ENCODE measurements at regions of chr3 and their contacts with region 1.

Region 1: GRCh38 chr3:194134757-194135528 is 1.0 kb upstream of the HES1 start:
- DNase-seq: peak; percentile 96 to 100
- H3K4me3 ChIP-seq: peak overlapping the region; percentile 55
- H3K27ac ChIP-seq: peak overlapping the region; percentile 88
- H3K4me1 ChIP-seq: peaks cover 60% of the 10 kb centered on the region
- H3K27me3 ChIP-seq: no peaks in the 10 kb centered on the region
- CTCF ChIP-seq: no peak

Region 2: DNA sequence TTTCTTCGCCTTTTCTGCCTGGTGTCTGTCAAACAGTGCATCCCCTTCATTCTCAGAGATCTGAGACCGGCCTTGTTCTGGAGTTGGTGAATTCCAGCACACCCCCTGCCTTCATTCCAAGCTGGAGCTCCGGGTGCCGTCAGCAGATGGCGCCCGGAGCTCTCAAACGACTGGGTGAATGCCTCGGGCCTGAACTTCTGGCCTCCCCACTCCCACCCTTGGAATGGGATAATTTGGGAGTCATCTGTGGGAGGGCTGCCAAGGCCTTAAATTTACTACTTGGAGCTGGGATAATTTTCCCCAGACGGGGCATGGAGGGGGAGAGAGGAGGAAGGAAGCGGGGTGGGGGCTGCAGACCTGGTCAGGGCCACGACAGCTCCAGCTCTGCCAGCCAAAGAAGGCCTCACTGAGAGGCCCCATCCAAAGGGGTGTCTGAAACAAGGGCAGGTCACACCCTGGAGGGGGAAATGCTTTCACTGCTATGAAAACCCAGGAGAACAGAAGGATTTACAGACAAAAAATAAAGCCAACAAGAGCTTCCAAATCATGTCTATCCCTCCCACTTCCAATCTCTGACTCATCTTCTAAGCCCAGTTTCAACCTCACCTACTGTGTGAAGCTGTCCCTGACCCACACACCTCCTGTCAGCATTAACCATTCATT is 354.0 kb before region 1 on chr3:
- CTCF ChIA-PET with region 1: interaction called, 5 read pairs
- POLR2A ChIA-PET with region 1: interaction called, 33 read pairs
- intact Hi-C with region 1: loop called (anchors 1 kb)
- DNase-seq: peak; percentile 89 to 96
- H3K4me3 ChIP-seq: no peak overlapping the region
- H3K27ac ChIP-seq: peak overlapping the region; percentile 98
- H3K4me1 ChIP-seq: peaks cover 59% of the 10 kb centered on the region
- H3K27me3 ChIP-seq: no peaks in the 10 kb centered on the region
- CTCF ChIP-seq: peak; percentile 99

Region 3: DNA sequence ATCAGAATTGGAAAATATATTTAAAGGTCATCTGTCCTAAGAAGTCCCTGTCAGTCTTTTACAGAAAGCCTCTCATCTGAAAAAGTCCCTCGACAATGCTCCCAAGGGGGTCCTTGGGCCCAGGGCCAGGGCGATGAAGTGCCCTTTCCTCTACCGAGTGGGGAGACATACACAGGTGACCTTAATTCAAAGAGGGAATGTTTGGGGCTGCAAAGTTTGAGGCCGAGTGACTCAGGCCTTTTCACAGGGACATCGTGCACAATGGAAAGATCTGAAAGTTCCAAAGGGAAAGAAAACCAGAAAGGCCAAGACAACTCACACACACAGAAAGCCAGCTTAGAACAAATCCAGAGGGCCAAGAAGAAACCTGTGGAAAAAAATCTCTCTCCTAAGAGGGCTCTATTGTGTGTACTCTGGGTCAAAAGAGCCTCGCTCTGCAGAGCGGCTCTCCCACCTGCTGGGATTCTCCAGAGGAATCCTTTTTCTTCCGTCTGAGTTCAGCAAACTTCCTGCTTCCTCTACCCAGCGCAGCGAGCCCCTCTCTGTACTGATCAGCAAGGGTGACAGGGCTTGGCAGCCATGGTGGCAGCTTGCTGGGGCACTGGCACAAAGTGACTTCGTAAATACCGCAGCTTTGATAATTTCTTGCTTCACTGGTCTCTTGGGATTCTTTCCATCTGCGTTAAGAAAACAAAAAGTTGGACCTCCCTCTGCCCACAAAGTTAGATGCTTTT is 282.8 kb before region 1 on chr3:
- CTCF ChIA-PET with region 1: no interaction called
- POLR2A ChIA-PET with region 1: interaction called, 27 read pairs
- intact Hi-C with region 1: loop called (anchors 1 kb)
- DNase-seq: peak; percentile 82 to 98
- H3K4me3 ChIP-seq: peak overlapping the region; percentile 49
- H3K27ac ChIP-seq: peak overlapping the region; percentile 98
- H3K4me1 ChIP-seq: peaks cover 70% of the 10 kb centered on the region
- H3K27me3 ChIP-seq: no peaks in the 10 kb centered on the region
- CTCF ChIP-seq: no peak

Region 4: GRCh38 chr3:193946945-193947344 is 188.0 kb before region 1 on chr3:
- CTCF ChIA-PET with region 1: interaction called, 17 read pairs
- POLR2A ChIA-PET with region 1: interaction called, 7 read pairs
- intact Hi-C with region 1: loop called (anchors 1 kb)
- DNase-seq: peak; percentile 83 to 87
- H3K4me3 ChIP-seq: no peak overlapping the region
- H3K27ac ChIP-seq: no peak overlapping the region
- H3K4me1 ChIP-seq: peaks cover 16% of the 10 kb centered on the region
- H3K27me3 ChIP-seq: no peaks in the 10 kb centered on the region
- CTCF ChIP-seq: no peak

Region 5: DNA sequence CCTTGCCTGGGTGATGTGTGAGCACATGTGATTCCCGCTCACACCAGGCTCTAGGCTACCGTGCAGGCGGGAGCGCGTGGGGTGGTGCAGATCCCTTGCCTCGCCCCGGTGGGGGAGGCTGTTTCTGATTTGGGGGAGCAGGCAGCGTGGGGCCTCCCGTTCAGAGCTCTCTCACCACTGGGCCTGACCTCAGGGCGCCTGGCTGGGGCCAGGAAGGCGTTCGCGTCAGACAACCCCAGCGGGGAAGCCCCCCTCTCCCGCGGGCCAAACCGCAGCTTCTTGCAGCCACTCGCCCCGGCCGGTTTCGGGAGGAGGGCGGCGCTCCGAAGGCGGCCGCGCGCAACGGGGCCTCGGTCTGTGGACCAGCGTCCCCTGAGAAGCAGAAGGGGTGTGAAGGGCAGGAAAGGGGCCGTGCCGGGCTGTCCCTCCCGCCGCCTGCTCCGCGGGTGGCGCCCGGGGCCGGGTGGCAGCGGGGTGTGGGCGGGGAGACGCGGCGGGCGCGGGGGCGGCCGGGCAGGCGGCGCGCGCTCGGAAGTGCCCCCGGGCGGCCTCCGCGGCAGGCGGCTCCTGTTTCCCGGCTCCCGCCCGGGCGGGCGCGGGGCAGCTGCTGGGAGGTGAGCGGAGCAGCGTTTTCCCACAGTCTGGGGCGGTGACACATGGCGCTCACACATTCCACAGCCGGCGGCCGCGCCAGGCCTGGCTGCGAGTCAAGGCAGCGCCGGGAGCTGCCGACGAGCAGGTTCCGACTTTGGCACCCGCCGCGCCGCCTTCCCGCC is 64.1 kb before region 1 on chr3:
- CTCF ChIA-PET with region 1: interaction called, 7 read pairs
- POLR2A ChIA-PET with region 1: interaction called, 26 read pairs
- intact Hi-C with region 1: loop called (anchors 1 kb)
- DNase-seq: peak; percentile 92 to 97
- H3K4me3 ChIP-seq: peak overlapping the region; percentile 59; the same call in 1 of the 2 replicates
- H3K27ac ChIP-seq: peak overlapping the region; percentile 74
- H3K4me1 ChIP-seq: peaks cover 47% of the 10 kb centered on the region
- H3K27me3 ChIP-seq: no peaks in the 10 kb centered on the region
- CTCF ChIP-seq: no peak

Region 6: DNA sequence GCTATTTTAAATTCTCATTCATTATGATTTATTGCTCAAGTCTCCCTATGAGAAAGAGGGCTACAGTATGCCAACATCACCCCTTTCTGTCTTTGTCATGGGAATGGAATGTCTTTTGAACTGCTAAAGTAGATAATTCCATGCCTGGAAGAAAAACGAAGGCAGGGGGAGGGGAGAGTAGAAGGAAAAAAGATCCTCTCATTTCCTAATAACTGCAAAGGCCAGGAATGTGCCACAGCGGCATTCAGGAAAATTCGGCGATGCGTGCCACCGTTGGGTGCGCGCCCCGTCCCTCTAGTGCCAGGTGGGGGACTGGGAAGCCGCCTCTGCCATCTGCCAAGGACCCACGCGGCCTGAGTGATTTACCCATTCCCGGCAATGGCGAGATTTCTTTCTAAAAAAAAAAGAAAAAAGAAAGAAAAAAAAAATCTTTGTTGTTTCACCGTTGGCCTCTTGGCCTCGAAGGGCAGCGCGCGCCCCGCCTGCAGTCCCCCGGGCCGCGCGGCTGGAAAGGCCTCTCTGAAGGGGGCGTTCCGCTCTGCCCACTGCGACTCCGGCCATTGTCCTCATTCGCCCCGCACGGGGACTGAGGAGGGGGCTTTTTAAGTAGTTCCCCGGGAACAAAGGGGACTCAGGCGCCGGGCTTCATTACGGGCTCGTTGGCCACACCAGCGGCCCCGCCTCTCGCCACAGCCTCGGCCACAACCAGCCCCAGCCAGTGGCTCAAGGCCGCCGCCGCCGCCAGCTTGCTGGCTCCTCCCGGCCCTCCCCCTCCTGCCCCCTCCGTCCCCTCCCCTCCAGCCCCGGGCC is 161.7 kb after region 1 on chr3:
- CTCF ChIA-PET with region 1: no interaction called
- POLR2A ChIA-PET with region 1: interaction called, 6 read pairs
- intact Hi-C with region 1: loop called (anchors 1 kb)
- DNase-seq: peak; percentile 94 to 98
- H3K4me3 ChIP-seq: peak overlapping the region; percentile 57
- H3K27ac ChIP-seq: peak overlapping the region; percentile 97
- H3K4me1 ChIP-seq: peaks cover 65% of the 10 kb centered on the region
- H3K27me3 ChIP-seq: no peaks in the 10 kb centered on the region
- CTCF ChIP-seq: peak; percentile 30; the same call in 1 of the 2 replicates

Measured in PC-9 (cell line).